ENCODE measurements at regions of chr6 and their contacts with region 1.

Region 1: DNA sequence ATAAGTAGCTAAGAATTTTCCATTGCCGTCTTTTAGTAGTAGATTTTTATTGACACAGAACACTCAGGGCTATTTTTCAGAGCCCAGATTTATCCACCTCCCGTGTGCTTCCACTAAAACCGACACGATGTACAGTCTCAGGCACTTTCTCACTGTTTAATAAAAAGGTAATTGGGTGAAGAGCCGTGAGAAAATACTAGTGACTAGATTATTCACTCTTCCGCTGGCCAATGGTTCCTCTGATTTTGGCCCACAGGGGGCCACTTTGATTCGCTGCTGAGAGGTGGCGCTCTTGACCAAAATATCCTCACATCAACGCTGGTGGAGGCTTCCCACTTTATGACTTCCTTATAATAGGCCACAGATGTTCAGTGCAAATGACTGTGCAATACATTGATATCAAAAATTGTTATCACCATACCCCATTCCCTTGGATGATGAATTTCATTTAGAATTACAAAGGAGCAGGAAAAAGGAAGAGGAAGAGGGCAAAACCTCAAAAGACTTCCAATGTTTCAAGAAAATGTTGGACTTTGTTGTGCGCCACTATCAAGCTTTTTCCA is 12.3 kb upstream of the HDDC2 start:
- DNase-seq: peak; percentile 42
- ATAC-seq: peak; percentile 93
- H3K4me3 ChIP-seq: no peak overlapping the region
- H3K27ac ChIP-seq: no peak overlapping the region
- H3K4me1 ChIP-seq: no peaks in the 10 kb centered on the region
- H3K27me3 ChIP-seq: 0 out of 2 replicates have a peak, but pooled peaks cover 3% of the 10 kb centered on the region
- CTCF ChIP-seq: peak; percentile 71 to 90 (median 81)
- POLR2A ChIP-seq: no peak
- RAD21 ChIP-seq: peak; percentile 91

Region 2: GRCh38 chr6:124870611-124871459 is 443.3 kb before region 1 on chr6:
- CTCF ChIA-PET with region 1: interaction called, 11 read pairs
- POLR2A ChIA-PET with region 1: no interaction called
- RAD21 ChIA-PET with region 1: interaction called in 1 of 2 experiments, 3 read pairs
- intact Hi-C with region 1: loop called (anchors 1 kb)
- DNase-seq: peak; percentile 21
- ATAC-seq: peak; percentile 40; the same call in 1 of the 2 replicates
- H3K4me3 ChIP-seq: no peak overlapping the region
- H3K27ac ChIP-seq: no peak overlapping the region
- H3K4me1 ChIP-seq: no peaks in the 10 kb centered on the region
- H3K27me3 ChIP-seq: 0 out of 2 replicates have a peak, but pooled peaks cover 7% of the 10 kb centered on the region
- CTCF ChIP-seq: peak; percentile 27 to 83 (median 76); a peak in 5 of 6 replicates
- POLR2A ChIP-seq: no peak
- RAD21 ChIP-seq: peak; percentile 92

Region 3: DNA sequence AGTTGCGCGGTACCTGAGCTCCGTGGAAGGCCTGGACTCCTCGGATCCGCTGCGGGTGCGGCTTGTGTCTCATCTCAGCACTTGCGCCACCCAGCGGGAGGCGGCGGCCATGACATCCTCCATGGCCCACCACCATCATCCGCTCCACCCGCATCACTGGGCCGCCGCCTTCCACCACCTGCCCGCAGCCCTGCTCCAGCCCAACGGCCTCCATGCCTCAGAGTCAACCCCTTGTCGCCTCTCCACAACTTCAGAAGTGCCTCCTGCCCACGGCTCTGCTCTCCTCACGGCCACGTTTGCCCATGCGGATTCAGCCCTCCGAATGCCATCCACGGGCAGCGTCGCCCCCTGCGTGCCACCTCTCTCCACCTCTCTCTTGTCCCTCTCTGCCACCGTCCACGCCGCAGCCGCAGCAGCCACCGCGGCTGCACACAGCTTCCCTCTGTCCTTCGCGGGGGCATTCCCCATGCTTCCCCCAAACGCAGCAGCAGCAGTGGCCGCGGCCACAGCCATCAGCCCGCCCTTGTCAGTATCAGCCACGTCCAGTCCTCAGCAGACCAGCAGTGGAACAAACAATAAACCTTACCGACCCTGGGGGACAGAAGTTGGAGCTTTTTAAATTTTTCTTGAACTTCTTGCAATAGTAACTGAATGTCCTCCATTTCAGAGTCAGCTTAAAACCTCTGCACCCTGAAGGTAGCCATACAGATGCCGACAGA is 445.2 kb after region 1 on chr6:
- CTCF ChIA-PET with region 1: interaction called, 49 read pairs
- POLR2A ChIA-PET with region 1: no interaction called
- RAD21 ChIA-PET with region 1: interaction called in 1 of 2 experiments, 4 read pairs
- intact Hi-C with region 1: loop called (anchors 2 kb)
- DNase-seq: peak; percentile 33
- ATAC-seq: peak; percentile 97
- H3K4me3 ChIP-seq: no peak overlapping the region
- H3K27ac ChIP-seq: no peak overlapping the region
- H3K4me1 ChIP-seq: peaks cover 0 to 6% of the 10 kb centered on the region in 2 experiments; a peak in 1 of 4 replicates
- H3K27me3 ChIP-seq: peaks cover 55% of the 10 kb centered on the region
- CTCF ChIP-seq: peak; percentile 53 to 85 (median 75); a peak in 5 of 6 replicates
- POLR2A ChIP-seq: no peak
- RAD21 ChIP-seq: peak; percentile 48

Region 4: DNA sequence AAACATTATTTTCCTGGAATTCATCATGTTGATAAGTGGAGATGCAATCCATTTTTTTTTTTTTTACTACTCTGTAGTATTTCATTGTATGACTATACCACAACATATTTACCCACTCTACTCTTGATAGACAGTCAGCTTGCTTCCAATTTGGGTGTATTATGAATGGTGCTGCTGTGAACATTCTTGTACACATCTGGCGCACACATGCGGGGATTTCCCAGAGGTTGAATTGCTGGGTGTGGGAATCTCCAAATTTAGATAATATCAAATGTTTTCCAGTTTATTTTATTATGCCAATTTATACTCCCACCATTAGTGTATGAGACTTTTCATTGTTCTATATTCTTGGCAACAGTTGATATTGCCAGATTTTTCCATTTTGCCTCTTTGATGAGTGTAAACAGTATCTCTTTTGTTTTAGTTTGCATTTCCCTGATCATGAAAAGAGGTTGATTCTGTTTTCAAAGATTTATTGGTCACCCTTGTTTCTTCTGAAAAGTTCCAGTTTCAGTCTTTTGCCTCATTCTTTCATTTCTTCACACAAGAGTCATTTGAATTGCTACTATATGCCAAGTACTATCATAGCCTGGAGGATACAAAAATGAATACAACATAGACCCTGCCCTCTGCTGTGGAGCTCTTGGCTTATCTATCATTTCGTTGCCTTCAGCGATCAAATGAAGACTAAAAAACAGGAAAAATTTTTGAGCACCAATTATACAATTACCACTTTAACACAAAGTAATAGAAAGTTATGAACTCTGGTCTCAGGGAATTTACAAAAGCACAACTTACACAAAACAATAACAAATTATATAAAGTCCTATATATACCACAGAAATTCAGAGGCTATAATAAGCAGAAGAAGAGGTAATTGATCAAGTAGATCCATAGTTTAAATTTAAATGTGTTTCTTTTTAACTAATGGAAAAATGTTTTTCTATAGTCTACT is 459.6 kb after region 1 on chr6:
- CTCF ChIA-PET with region 1: interaction called, 4 read pairs
- POLR2A ChIA-PET with region 1: no interaction called
- RAD21 ChIA-PET with region 1: no interaction called
- intact Hi-C with region 1: loop called (anchors 1 kb)
- DNase-seq: no peak
- ATAC-seq: no peak
- H3K4me3 ChIP-seq: no peak overlapping the region
- H3K27ac ChIP-seq: no peak overlapping the region
- H3K4me1 ChIP-seq: no peaks in the 10 kb centered on the region
- H3K27me3 ChIP-seq: no peaks in the 10 kb centered on the region
- CTCF ChIP-seq: no peak
- POLR2A ChIP-seq: no peak
- RAD21 ChIP-seq: no peak

Region 5: GRCh38 chr6:127120787-127121636 is 1806.9 kb after region 1 on chr6:
- CTCF ChIA-PET with region 1: no interaction called
- POLR2A ChIA-PET with region 1: no interaction called
- RAD21 ChIA-PET with region 1: no interaction called
- intact Hi-C with region 1: loop called (anchors 2 kb)
- DNase-seq: peak; percentile 63
- ATAC-seq: peak; percentile 95
- H3K4me3 ChIP-seq: no peak overlapping the region
- H3K27ac ChIP-seq: no peak overlapping the region
- H3K4me1 ChIP-seq: no peaks in the 10 kb centered on the region
- H3K27me3 ChIP-seq: peaks cover 36% of the 10 kb centered on the region
- CTCF ChIP-seq: peak; percentile 60 to 91 (median 70); a peak in 5 of 6 replicates
- POLR2A ChIP-seq: no peak
- RAD21 ChIP-seq: peak; percentile 93